Activated B cell treated with CpG ODN at 0.5 μM for 24 hours (primary cell): ENCODE measurements at regions of chr3 and their contacts with region 1.

Region 1: DNA sequence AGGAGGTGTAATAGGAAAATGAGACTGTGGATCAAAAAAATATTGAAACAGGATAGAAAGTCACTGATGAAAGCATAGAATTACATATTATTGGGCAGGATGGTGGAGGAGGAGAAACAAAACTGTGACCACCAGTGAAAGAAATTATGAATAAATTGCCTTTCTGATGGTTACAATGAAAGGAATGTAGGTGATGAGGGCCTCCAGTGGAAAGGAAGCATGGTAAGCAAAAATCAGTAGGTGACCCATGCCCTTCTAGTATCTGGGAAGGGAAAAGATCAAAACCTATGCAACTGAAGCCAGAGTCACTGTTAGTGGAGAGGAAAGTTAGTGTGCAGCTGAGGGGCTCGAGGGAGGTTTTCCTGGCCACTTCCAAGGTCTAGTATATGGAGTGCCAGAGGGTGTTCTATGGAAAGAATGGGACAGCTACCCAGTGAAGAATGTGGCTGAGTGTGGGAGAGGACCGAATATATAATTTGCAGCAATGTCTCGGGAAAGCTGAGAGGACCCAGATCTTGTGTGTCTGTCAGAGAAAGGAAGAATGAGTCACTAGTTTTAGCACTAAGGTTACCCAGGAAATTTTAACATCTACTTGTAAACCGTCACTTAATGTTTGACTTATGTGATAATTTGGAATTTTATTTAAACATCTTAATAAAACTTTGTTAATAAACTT is 146.2 kb downstream of the NFKBIZ start:
- DNase-seq: no peak
- ATAC-seq: no peak
- H3K4me3 Mint-ChIP-seq: peak overlapping the region; percentile 5
- H3K27ac Mint-ChIP-seq: peak overlapping the region; percentile 78
- H3K4me1 Mint-ChIP-seq: peaks cover 68% of the 10 kb centered on the region
- H3K27me3 Mint-ChIP-seq: no peaks in the 10 kb centered on the region
- CTCF ChIP-seq: no peak

Region 2: DNA sequence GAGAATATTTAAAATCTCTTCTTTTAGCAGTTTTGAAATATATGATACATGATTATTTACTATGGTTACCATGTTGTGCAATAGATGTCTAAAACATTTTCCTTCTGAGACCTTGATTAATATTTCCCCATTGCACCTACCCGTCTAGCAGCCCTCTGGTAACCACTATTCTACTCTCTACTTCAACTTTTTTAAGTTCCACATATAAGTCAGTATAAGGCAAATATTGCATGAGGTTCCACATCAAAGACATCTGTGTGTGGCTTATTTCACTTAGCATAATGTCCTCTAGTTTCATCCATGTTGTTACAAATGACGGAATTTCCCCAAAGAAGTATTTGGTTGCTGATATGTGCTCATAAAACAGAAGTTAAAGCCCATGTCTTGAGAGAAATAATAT is 175.8 kb before region 1 on chr3:
- CTCF ChIA-PET with region 1: interaction called, 7 read pairs
- POLR2A ChIA-PET with region 1: interaction called, 5 read pairs
- intact Hi-C with region 1: loop called (anchors 2 kb)
- DNase-seq: no peak
- ATAC-seq: peak; percentile 83
- H3K4me3 Mint-ChIP-seq: no peak overlapping the region
- H3K27ac Mint-ChIP-seq: peak overlapping the region; percentile 81
- H3K4me1 Mint-ChIP-seq: peaks cover 64% of the 10 kb centered on the region
- H3K27me3 Mint-ChIP-seq: no peaks in the 10 kb centered on the region
- CTCF ChIP-seq: no peak

Region 3: GRCh38 chr3:101827211-101828174 is 168.0 kb before region 1 on chr3:
- CTCF ChIA-PET with region 1: no interaction called
- POLR2A ChIA-PET with region 1: interaction called, 12 read pairs
- intact Hi-C with region 1: no loop called
- DNase-seq: peak; percentile 68
- ATAC-seq: peak; percentile 86
- H3K4me3 Mint-ChIP-seq: peak overlapping the region; percentile 87
- H3K27ac Mint-ChIP-seq: peak overlapping the region; percentile 98
- H3K4me1 Mint-ChIP-seq: peaks cover 66% of the 10 kb centered on the region
- H3K27me3 Mint-ChIP-seq: no peaks in the 10 kb centered on the region
- CTCF ChIP-seq: no peak

Region 4: DNA sequence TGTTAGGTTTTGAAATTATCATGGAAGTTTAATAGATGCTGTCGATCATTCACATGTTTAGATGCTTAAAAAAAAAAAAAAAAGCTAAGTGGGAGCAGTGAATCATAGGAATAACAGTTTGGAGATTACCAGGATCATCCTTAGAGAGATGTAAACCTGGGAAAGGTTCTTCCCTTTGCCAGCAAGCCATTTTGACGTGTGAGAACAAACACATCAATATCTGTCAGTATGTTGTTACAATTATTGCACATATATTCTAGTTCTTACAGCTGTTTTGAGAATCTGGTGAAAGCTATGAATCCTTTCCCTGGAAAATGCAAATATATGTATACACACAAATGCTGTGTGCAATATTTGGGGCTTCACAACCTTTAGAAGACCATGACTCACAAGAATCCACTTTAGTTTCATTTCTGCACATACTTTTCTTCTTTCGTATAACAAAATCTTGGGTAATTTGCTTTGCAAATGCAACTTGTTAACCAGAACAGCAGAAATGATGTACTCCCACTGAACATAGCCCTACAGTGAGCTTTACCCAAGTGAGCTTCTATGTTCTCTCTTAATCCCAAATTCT is 134.2 kb before region 1 on chr3:
- CTCF ChIA-PET with region 1: no interaction called
- POLR2A ChIA-PET with region 1: interaction called, 15 read pairs
- intact Hi-C with region 1: no loop called
- DNase-seq: no peak
- ATAC-seq: peak; percentile 64
- H3K4me3 Mint-ChIP-seq: peak overlapping the region; percentile 51
- H3K27ac Mint-ChIP-seq: peak overlapping the region; percentile 75
- H3K4me1 Mint-ChIP-seq: peaks cover 76% of the 10 kb centered on the region
- H3K27me3 Mint-ChIP-seq: no peaks in the 10 kb centered on the region
- CTCF ChIP-seq: no peak

Region 5: DNA sequence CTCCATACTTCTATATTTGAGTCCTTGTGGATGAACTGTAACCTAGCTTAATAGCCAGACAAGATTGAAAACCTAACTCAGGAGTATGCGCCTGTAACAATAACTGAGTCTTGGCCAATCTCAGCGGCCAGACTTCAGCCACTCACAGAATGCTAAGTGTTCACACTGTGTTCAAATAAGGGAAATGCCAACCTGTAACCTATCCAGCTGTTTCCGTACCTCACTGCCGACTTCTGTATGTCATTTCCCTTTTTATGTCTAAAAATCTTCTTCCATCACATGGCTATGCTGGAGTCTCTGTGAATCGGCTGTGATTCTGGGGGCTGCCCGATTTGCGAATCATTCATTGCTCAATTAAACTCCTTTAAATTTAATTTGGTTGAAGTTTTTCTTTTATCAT is 23.0 kb after region 1 on chr3:
- CTCF ChIA-PET with region 1: interaction called, 3 read pairs
- POLR2A ChIA-PET with region 1: interaction called, 9 read pairs
- intact Hi-C with region 1: loop called (anchors 2 kb)
- DNase-seq: no peak
- ATAC-seq: peak; percentile 82
- H3K4me3 Mint-ChIP-seq: peak overlapping the region; percentile 15
- H3K27ac Mint-ChIP-seq: peak overlapping the region; percentile 76
- H3K4me1 Mint-ChIP-seq: peaks cover 44% of the 10 kb centered on the region
- H3K27me3 Mint-ChIP-seq: no peaks in the 10 kb centered on the region
- CTCF ChIP-seq: no peak